B cell (primary cell): ENCODE measurements at regions of chr4 and their contacts with region 1.

Region 1: DNA sequence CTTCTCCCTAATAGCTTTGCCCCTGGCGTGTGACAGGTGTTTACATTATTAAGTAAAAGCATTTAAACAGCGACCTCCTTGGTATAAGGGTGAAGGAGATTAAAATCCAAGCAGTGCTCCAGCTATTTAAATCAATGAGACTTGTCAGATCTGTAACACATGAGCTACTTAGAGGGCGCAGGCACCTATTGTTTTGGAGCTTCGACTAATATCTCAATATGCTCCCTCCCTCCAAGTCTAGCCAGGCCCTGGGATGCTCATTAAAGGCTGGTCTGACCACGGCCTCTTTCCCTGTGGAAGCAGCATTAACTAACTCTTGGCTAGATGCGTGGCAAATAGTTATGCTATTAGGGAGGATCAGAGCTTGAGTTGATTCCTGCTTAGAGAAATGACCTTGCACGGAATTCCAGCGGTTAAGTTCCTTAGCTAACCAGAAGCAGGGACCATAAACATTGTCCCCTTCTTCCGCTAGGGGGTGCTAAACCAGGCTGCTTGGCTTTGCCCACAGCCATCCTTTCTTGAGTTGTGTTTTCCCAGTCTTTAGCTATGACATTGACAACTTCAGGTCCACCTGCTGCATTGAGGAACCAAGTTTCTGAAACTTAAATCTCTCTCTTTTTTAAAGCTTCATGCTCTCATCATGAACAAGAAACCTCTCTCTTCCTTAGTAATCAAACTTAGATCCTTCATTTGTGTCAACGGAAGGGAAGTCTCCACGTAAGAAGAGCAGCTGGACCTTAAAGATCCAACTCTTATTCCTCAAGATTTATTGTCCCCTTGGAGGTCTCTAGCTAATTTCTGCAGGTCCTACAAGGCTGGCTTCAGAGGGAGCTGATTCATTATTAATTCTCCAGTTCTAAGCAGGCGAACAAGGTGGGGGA is 80.7 kb upstream of the IGFBP7 start:
- DNase-seq: no peak
- ATAC-seq: no peak
- H3K4me3 ChIP-seq: no peak overlapping the region
- H3K4me3 Mint-ChIP-seq: no peak overlapping the region
- H3K27ac ChIP-seq: no peak overlapping the region
- H3K27ac Mint-ChIP-seq: no peak overlapping the region
- H3K4me1 ChIP-seq: no peaks in the 10 kb centered on the region
- H3K4me1 Mint-ChIP-seq: no peaks in the 10 kb centered on the region
- H3K27me3 ChIP-seq: peaks cover 0 to 5% (median 0%) of the 10 kb centered on the region in 4 experiments
- H3K27me3 Mint-ChIP-seq: peaks cover 14% of the 10 kb centered on the region
- CTCF ChIP-seq: peak; percentile 56

Region 2: DNA sequence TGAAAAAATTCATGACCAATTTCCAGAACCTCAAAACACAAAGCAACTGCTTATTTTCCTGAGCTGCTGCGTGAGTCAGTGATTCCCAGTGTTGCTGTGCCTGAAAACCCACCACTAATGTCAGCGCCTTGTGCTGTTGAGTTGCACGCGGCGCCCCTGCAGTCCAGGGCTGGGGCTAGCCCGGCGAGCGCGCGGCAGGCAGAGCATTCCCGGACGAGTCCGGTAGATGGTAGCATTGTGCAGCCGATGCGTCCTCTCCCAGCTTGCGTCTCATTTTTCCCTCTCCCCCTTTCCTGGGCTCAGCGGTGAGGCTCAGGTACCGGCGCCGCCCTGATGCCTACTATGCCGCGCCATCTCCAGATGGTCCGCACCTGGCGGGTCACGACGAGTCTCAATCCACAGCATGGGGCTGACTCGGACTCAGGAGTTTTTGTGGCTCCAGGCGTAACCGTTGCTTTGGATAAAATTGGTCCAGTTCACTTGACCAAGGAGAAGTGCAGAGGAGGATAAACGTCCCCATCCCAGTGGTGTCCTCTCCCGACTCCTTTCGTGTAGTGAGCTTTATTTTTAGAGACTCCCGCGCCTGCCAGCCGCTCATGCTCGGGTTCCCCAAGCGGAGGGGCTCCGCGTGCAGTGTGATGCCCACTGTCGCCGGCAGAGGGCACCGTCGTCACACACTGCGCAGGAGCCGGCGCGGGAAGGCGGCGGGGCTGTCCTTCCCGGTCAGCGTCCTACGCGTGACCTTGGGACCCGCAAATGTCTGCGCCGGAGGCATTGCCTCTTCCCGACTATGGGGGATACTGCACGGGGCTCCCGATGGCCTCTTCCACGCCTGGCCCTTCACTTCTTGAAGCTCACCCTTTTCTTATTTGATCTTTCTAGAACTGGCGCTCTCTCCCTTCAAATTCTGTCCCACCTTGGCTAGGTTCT is 27.0 kb before region 1 on chr4:
- CTCF ChIA-PET with region 1: interaction called, 13 read pairs
- POLR2A ChIA-PET with region 1: no interaction called
- intact Hi-C with region 1: no loop called
- DNase-seq: peak; percentile 73
- ATAC-seq: peak; percentile 87
- H3K4me3 ChIP-seq: peak overlapping the region; percentile 53 to 85 (median 63)
- H3K4me3 Mint-ChIP-seq: peak overlapping the region; percentile 90
- H3K27ac ChIP-seq: no peak overlapping the region
- H3K27ac Mint-ChIP-seq: no peak overlapping the region
- H3K4me1 ChIP-seq: peaks cover 4 to 10% of the 10 kb centered on the region in 2 donors
- H3K4me1 Mint-ChIP-seq: peaks cover 7% of the 10 kb centered on the region
- H3K27me3 ChIP-seq: peaks cover 0 to 24% (median 9%) of the 10 kb centered on the region in 4 experiments
- H3K27me3 Mint-ChIP-seq: peaks cover 20% of the 10 kb centered on the region
- CTCF ChIP-seq: peak; percentile 92

Region 3: DNA sequence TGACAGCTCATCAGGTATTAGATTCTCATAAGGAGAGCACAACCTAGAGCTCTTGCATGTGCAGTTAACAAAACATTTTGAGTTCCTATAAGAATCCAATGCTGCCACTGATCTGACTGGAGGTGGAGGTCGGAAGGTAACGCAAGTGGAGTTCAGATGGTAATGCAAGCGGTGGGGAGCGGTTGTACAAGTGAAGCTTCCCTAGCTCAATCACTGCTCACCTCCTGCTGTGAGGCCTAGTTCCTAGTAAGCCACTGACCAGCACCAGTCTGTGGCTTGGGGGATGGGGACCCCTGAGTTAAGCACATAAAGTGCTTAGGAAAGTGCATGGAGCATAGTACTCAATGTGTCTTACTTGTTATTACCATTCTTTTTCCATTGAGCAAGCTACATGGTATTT is 902.5 kb after region 1 on chr4:
- CTCF ChIA-PET with region 1: no interaction called
- POLR2A ChIA-PET with region 1: no interaction called
- intact Hi-C with region 1: no loop called
- DNase-seq: no peak
- ATAC-seq: no peak
- H3K4me3 ChIP-seq: no peak overlapping the region
- H3K4me3 Mint-ChIP-seq: no peak overlapping the region
- H3K27ac ChIP-seq: no peak overlapping the region
- H3K27ac Mint-ChIP-seq: no peak overlapping the region
- H3K4me1 ChIP-seq: no peaks in the 10 kb centered on the region
- H3K4me1 Mint-ChIP-seq: no peaks in the 10 kb centered on the region
- H3K27me3 ChIP-seq: no peaks in the 10 kb centered on the region
- H3K27me3 Mint-ChIP-seq: no peaks in the 10 kb centered on the region
- CTCF ChIP-seq: no peak